ENCODE measurements at regions of chr3 and their contacts with region 1.

Region 1: DNA sequence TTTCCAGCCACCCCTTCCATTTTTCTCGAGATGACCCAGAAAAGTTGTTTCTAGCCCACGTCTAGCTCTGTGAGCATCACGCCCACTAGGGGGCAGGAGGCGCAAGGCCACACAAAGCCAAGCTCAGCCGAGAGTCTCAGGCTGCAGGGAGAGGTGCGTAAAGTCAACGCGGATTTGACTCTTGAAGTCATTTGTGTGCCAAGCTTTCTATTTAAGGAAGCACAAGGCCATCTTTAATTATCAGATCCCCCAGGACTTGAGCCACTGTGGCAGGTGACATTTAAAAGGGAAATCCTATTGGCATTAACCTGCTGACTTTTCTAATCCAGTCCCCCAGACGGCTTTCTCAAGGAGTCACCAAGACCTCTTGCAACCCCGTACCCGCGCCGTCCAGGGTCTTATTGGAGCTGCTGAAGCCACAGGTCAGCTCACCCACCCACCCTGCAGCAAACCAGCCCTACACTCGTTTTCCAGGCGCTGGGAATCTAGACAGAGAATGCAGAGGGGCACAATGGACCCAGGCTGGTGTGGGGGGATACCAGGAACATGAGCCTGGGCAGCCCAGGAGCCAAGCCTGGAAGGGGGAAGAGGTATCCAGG is 62.1 kb downstream of the CAPN7 start:
- DNase-seq: peak; percentile 61
- H3K4me3 ChIP-seq: no peak overlapping the region
- H3K27ac ChIP-seq: no peak overlapping the region
- H3K27me3 ChIP-seq: no peaks in the 10 kb centered on the region
- CTCF ChIP-seq: peak; percentile 97

Region 2: DNA sequence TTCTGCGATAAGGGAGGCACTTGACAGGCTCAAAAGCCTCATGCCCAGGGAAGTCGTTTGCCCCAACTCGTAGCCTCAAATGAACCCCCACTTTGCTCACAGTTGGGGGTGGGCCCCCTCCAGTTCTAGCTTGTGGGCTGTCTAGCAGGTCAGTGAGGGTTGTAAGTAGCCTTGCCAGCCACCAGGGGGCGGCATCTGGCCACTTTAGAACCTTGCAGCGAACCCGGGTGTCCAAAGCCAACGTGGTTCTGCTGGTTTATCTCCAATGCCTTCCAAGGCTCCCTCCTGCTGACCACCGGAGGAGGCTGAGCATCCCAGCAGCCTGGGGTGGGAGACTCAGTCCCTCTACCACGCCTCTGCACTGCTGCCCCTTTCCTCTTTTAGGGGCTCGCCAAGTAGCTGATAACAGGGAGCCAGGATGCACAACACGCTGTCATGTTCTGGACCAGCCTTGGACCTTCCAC is 160.0 kb before region 1 on chr3:
- CTCF ChIA-PET with region 1: interaction called, 11 read pairs
- POLR2A ChIA-PET with region 1: no interaction called
- DNase-seq: peak; percentile 50
- H3K4me3 ChIP-seq: no peak overlapping the region
- H3K27ac ChIP-seq: no peak overlapping the region
- H3K27me3 ChIP-seq: peaks cover 9% of the 10 kb centered on the region
- CTCF ChIP-seq: peak; percentile 89

Region 3: GRCh38 chr3:15284121-15284889 is 16.2 kb after region 1 on chr3:
- CTCF ChIA-PET with region 1: interaction called, 58 read pairs
- POLR2A ChIA-PET with region 1: no interaction called
- DNase-seq: no peak
- H3K4me3 ChIP-seq: no peak overlapping the region
- H3K27ac ChIP-seq: no peak overlapping the region
- H3K27me3 ChIP-seq: no peaks in the 10 kb centered on the region
- CTCF ChIP-seq: no peak

Region 4: DNA sequence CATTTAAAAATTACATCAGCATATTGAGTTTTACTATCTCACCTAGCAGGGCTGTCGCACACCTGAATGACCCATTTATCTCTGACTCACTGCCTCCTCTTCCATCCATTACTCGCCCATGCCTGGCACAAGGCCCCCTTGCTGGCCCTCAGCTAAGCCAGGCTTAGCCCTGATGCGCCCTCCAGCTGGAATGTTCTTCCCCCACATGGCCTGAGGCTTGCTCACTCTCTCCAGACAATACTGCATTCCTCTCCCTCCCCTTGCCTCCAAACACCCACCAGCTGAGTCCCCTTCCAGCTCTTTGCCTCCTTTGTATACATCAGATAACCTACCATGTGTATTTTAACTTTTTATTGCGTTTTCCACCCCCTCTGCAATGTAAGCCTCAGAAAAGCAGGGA is 57.1 kb after region 1 on chr3:
- CTCF ChIA-PET with region 1: interaction called, 19 read pairs
- POLR2A ChIA-PET with region 1: no interaction called
- DNase-seq: peak; percentile 51
- H3K4me3 ChIP-seq: no peak overlapping the region
- H3K27ac ChIP-seq: peak overlapping the region; percentile 39
- H3K27me3 ChIP-seq: no peaks in the 10 kb centered on the region
- CTCF ChIP-seq: no peak

Region 5: DNA sequence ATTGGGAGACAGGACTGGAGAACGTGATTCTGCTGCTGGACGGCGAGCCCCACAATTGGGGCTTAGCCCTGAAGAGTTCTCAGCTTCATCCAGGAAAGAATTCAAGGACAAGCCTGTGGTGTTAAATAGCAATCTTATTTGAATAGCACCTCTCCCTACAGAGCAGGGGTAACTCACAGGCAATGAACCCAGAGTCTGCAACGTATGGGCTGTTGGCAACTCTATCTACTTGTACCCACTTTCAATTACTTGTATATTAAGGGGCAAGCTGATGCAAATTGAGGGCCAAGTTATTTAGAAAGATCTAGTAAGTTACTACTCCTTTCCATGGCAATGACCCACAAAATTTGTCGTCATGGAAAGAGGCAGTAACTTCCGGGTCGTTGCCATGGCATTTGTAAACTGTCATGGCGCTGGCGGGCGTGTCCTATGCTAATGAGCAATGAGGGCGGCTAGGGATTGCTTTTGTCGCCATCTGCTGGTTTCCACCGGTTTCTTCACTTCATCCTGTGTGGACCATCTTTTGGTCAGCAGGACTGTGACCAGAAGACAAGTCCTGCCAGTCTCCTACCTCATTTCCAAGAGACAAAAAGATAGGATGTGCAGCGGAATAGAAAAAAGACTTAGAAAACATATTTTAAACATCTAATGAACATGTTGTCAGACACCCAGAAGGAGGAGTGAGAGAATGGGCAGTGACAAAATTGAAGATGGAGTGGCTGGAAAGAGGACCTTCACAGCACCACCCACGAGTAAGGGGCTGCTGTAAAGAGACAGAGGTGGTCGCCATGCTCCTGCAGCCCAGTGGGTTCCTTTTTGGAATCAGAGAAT is 110.0 kb after region 1 on chr3:
- CTCF ChIA-PET with region 1: interaction called, 110 read pairs
- POLR2A ChIA-PET with region 1: interaction called, 3 read pairs
- DNase-seq: peak; percentile 79
- H3K4me3 ChIP-seq: no peak overlapping the region
- H3K27ac ChIP-seq: no peak overlapping the region
- H3K27me3 ChIP-seq: no peaks in the 10 kb centered on the region
- CTCF ChIP-seq: peak; percentile 90

Region 6: DNA sequence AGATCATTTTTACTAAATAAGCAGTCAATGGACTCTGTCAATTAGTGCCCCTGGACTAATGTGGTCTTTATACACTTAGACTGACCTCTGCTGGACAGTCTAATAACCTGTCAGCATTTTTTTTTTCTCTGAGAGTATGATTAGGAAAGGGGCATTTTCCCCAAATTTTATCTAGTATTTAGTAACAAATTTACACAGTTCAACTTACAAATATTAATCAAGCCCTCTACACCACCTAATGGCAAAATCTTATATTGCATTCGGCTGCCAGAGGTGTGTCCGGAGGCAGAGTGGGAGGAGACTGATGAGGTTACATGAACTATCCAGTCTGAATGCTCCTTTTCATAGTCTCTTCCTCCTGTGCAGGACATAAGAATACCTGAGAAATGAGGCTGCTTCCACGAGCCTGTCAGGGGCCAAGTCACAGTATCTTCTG is 289.4 kb after region 1 on chr3:
- CTCF ChIA-PET with region 1: interaction called, 18 read pairs
- POLR2A ChIA-PET with region 1: no interaction called
- DNase-seq: peak; percentile 39
- H3K4me3 ChIP-seq: no peak overlapping the region
- H3K27ac ChIP-seq: no peak overlapping the region
- H3K27me3 ChIP-seq: no peaks in the 10 kb centered on the region
- CTCF ChIP-seq: peak; percentile 67

Region 7: GRCh38 chr3:15623535-15624440 is 355.7 kb after region 1 on chr3:
- CTCF ChIA-PET with region 1: no interaction called
- POLR2A ChIA-PET with region 1: no interaction called
- DNase-seq: no peak
- H3K4me3 ChIP-seq: no peak overlapping the region
- H3K27ac ChIP-seq: no peak overlapping the region
- H3K27me3 ChIP-seq: no peaks in the 10 kb centered on the region
- CTCF ChIP-seq: no peak